ENCODE measurements at regions of chr3 and their contacts with region 1.

Region 1: GRCh38 chr3:151156618-151157216 is 46.3 kb downstream of the GPR171 start:
- DNase-seq: no peak
- ATAC-seq: peak; percentile 40 to 83 (median 70)
- H3K4me3 ChIP-seq: no peak overlapping the region
- H3K27ac ChIP-seq: no peak overlapping the region
- H3K4me1 ChIP-seq: no peaks in the 10 kb centered on the region
- H3K27me3 ChIP-seq: no peaks in the 10 kb centered on the region
- CTCF ChIP-seq: peak in 2 of 4 donors; percentile 16 to 19

Region 2: DNA sequence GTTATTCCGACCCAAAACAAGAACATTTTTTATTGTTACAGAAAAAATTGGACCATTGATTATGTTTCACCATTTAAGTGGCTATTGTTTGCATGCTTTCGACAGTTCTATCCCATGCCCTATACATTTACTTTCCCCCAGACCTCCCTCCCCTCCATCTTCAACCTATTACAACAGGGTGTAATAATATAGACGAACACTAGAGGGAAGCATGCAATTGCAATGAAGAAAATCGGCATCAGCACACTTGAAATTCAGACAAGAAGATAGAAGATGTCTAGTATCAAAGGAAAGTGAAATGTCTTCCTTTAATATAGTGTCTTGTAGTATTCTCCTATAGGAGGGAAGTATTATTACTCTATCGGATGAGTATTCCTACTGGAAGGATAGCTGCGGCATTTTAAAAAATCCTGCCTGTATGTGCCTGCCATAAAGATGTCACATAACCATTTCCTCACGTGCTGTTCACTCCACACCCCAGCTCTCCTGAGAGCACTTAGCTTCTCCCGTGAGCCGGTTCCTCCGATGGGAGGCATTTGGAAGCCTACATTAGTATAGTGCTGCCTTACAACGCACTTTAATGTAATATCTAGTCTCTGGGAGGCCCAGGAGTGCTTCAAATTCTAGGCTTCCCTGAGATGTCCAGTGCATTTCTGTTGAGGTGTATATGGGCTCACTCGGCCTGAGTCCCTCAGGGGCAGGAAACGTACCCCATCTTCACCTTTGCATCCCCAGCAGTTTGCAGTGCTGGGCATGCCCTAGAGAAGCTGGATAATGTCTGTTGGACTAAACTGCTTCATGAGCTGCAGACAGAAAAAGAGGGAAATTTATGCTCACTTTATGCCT is 435.2 kb before region 1 on chr3:
- intact Hi-C with region 1: loop called in 1 of 3 experiments (anchors 10 kb)
- DNase-seq: no peak
- ATAC-seq: peak; percentile 69 to 96 (median 90)
- H3K4me3 ChIP-seq: no peak overlapping the region
- H3K27ac ChIP-seq: no peak overlapping the region
- H3K4me1 ChIP-seq: no peaks in the 10 kb centered on the region
- H3K27me3 ChIP-seq: no peaks in the 10 kb centered on the region
- CTCF ChIP-seq: peak; percentile 43 to 84 (median 66)